RWPE1 (cell line): ENCODE measurements at regions of chr20 and their contacts with region 1.

Region 1: DNA sequence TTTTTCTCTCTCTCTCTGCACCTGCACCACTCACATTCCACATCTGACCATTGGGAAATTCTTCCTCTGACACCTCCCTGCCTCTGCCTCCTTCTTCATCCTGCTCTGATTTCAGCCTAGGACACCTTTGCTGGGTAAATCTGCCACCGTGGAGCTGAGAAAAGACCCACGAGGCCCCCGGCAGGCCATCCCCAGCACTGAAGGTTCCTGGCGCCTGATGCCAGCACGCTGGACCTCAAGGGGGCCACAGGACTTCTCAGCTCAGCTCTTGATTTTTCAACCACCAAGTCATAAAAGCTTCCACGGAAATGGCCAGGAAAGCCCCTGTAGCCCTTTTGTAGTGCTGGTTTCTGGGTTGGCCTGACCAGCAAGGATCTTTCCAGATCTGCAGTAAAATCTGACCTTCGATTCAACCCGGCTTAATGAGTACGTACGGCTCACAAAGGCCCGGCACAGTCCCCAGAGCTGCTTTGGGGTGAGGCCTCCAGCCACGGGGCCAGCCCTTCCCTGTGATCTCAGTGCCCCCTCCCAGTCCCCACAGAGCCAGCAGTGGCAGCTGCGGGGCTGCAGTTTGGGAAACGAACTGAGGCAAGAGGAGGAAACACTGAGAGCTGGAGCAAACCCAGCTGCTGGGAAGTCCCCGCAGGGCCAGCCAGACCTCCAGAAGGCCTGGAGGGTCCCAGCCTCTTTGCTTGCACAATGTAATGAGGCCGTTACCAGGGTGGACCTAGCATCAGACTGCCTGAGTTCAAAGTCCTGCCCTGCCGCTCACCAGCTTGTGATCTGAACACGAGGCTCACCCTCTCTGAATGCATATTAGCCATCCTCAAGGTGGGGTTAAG is 157.5 kb downstream of the BMP7 start:
- DNase-seq: no peak
- H3K27ac ChIP-seq: no peak overlapping the region
- CTCF ChIP-seq: no peak

Region 2: GRCh38 chr20:57294550-57294949 is 185.6 kb after region 1 on chr20:
- CTCF ChIA-PET with region 1: no interaction called
- POLR2A ChIA-PET with region 1: no interaction called
- DNase-seq: no peak
- H3K27ac ChIP-seq: no peak overlapping the region
- CTCF ChIP-seq: no peak

Region 3: GRCh38 chr20:58252887-58253286 is 1143.9 kb after region 1 on chr20:
- CTCF ChIA-PET with region 1: no interaction called
- POLR2A ChIA-PET with region 1: interaction called, 15 read pairs
- DNase-seq: no peak
- H3K27ac ChIP-seq: no peak overlapping the region
- CTCF ChIP-seq: no peak